CD8-positive, alpha-beta T cell (primary cell): ENCODE measurements at regions of chr15 and their contacts with region 1.

Region 1: DNA sequence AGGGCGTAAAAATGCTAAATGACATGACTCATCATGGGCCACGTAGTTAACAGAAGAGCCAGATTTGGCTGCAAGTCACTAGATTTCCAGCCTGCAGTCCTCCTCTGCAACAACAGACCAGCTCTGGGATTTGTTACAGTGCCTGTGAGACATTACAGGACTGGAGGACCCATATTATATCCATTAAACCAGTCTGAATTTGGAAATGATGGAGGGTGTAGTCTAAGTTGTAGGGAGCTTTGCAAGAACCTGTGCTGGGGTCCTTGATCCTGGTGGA is 10.8 kb downstream of the ZNF774 start:
- DNase-seq: no peak
- ATAC-seq: no peak
- H3K4me3 ChIP-seq: no peak overlapping the region
- H3K4me3 Mint-ChIP-seq: no peak overlapping the region
- H3K27ac ChIP-seq: no peak overlapping the region
- H3K27ac Mint-ChIP-seq: no peak overlapping the region
- H3K4me1 ChIP-seq: peaks cover 12% of the 10 kb centered on the region
- H3K4me1 Mint-ChIP-seq: peaks cover 18% of the 10 kb centered on the region
- H3K27me3 ChIP-seq: no peaks in the 10 kb centered on the region
- H3K27me3 Mint-ChIP-seq: no peaks in the 10 kb centered on the region
- CTCF ChIP-seq: no peak

Region 2: DNA sequence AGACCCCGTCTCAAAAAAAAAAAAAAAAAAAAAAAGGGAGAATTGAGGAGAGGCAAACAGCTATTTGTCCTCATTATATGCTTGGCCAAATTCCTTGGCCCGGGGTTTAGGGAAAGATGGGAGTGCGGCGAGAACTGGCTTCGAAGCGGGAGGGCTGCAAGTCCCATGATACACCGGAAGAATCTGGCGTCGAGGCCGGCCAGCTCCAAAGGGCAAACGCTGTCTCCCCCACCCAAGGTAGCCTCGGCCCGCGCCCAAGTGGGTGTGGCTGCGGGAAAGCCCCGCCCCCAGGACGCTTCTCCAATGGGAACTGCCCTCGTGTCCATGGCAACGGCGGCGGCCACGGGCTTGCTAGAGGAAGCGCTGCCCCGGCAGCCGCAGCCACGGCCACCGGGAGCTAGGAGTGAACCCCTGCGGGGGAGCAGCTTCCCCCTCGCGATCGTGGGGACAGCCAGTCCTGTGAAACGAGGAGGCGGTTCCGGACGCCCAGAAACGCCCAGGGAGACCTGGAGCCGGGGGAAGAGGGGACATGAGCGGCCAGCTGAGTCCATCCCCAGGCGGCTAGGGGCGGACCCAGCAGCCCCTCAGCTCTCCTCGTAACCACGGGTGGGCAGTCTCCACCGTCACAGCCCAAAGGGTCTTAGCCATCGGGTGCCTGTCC is 113.5 kb before region 1 on chr15 and contains the start of gene TTLL13:
- CTCF ChIA-PET with region 1: no interaction called
- POLR2A ChIA-PET with region 1: no interaction called
- intact Hi-C with region 1: no loop called
- DNase-seq: peak in 8 of 9 experiments; percentile 53 to 82 (median 72)
- ATAC-seq: peak; percentile 59
- H3K4me3 ChIP-seq: peak within 1 kb of the TSS; percentile 60 to 64
- H3K4me3 Mint-ChIP-seq: peak within 1 kb of the TSS; percentile 69
- H3K27ac ChIP-seq: peak within 1 kb of the TSS in 1 of 2 experiments; percentile 27
- H3K27ac Mint-ChIP-seq: no peak within 1 kb of the TSS
- H3K4me1 ChIP-seq: peaks cover 7% of the 10 kb centered on the region
- H3K4me1 Mint-ChIP-seq: peaks cover 13% of the 10 kb centered on the region
- H3K27me3 ChIP-seq: no peaks in the 10 kb centered on the region
- H3K27me3 Mint-ChIP-seq: no peaks in the 10 kb centered on the region
- CTCF ChIP-seq: no peak
- total RNA-seq, gene TTLL13: 0.28 to 1.1 TPM

Region 3: DNA sequence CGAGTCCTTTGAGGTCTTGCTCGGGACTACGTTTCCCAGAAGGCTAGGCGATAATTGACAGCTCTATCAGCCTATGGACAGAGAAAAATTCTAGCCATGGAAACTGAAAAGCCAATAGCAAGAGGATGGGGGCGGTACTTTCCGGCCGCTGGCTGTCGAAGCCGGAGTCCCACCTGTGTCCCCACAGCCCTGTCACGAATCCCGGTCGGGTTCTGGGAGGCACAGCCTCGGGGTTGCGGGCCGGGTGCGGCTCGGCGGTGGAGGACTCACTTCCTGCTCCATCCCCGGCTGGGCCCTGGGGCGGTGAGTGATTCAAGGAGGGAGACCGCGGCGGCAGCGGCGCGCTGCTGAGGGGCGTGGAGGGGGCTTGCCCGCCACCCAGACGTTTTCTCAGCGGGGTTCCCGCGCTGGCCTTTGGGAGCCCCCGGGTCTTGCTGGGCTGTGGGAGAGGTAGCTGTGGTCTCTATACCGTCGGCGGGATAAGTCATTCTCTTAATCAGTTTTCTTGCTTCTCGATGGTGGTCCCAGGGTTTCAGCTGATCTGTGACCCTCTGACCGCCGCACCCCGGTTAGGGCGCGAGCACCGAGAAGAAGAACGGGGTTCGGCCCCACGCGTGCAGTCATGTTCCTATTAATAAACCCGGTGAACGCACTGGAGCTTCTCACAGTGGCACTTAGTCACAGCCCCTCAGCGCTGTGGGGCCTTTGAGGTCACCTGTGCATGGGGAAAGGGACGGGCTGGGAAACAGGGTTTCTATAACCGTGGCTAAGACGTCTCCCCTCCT is 10.6 kb before region 1 on chr15 and contains the start of gene ZNF774:
- CTCF ChIA-PET with region 1: interaction called, 27 read pairs
- POLR2A ChIA-PET with region 1: interaction called, 4 read pairs
- intact Hi-C with region 1: no loop called
- DNase-seq: peak; percentile 76 to 97 (median 89)
- ATAC-seq: peak; percentile 97
- H3K4me3 ChIP-seq: peak within 1 kb of the TSS; percentile 66 to 69
- H3K4me3 Mint-ChIP-seq: peak within 1 kb of the TSS; percentile 90
- H3K27ac ChIP-seq: peak within 1 kb of the TSS in 1 of 2 experiments; percentile 18
- H3K27ac Mint-ChIP-seq: peak within 1 kb of the TSS; percentile 79
- H3K4me1 ChIP-seq: peaks cover 5% of the 10 kb centered on the region
- H3K4me1 Mint-ChIP-seq: peaks cover 7% of the 10 kb centered on the region
- H3K27me3 ChIP-seq: no peaks in the 10 kb centered on the region
- H3K27me3 Mint-ChIP-seq: no peaks in the 10 kb centered on the region
- CTCF ChIP-seq: no peak
- total RNA-seq, gene ZNF774: 0.08 TPM in 1 of 2 experiments, not detected in the other

Region 4: DNA sequence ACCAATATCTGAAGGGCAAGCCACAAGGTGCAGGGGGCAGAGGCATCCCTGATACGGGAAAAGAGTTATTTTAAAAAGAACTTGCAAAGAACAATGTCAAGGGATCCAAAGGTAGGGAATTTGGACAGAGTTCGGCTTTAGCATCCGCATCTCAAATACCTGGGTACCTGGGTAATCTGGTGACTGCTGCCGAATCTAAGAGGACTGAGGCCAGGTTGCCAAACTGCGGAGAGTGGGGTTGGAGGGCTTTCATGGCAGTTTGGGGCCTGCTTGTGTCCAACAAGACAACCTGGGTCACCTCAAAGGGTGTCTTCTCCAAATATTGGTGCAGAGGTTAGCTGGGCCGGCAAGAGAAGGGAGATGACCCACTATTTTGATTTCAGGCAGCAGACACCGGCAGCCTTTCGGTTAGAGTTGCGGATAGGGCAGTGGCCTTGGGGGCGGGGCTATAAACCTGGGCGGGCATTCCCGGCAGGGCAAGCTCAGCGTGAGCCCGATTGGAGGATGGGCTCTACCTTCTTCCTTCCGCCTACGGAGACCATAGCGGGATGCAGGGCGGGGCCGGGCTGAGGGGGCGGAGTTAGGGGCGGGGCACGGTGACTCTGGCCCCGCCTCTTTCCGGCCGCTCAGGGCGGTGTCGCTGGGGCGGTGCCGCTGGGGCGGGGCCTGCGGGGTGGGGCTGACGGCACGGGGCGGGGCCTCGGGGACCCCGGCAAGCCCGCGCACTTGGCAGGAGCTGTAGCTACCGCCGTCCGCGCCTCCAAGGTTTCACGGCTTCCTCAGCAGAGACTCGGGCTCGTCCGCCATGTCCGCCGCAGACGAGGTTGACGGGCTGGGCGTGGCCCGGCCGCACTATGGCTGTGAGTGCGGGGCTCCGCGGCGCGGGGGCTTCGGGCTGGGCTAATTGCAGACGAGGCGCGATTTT is 24.9 kb after region 1 on chr15 and contains the start of gene IQGAP1:
- CTCF ChIA-PET with region 1: interaction called, 8 read pairs
- POLR2A ChIA-PET with region 1: no interaction called
- intact Hi-C with region 1: loop called in 1 of 2 experiments (anchors 1 kb)
- DNase-seq: peak; percentile 92 to 97 (median 95)
- ATAC-seq: peak; percentile 91
- H3K4me3 ChIP-seq: peak within 1 kb of the TSS; percentile 90 to 94
- H3K4me3 Mint-ChIP-seq: peak within 1 kb of the TSS; percentile 90
- H3K27ac ChIP-seq: peak within 1 kb of the TSS; percentile 86 to 90
- H3K27ac Mint-ChIP-seq: peak within 1 kb of the TSS; percentile 96
- H3K4me1 ChIP-seq: peaks cover 44% of the 10 kb centered on the region
- H3K4me1 Mint-ChIP-seq: peaks cover 45% of the 10 kb centered on the region
- H3K27me3 ChIP-seq: no peaks in the 10 kb centered on the region
- H3K27me3 Mint-ChIP-seq: no peaks in the 10 kb centered on the region
- CTCF ChIP-seq: no peak
- total RNA-seq, gene IQGAP1: 57.4 to 69.5 TPM

Region 5: GRCh38 chr15:90432253-90432652 is 69.4 kb after region 1 on chr15:
- CTCF ChIA-PET with region 1: interaction called, 7 read pairs
- POLR2A ChIA-PET with region 1: no interaction called
- intact Hi-C with region 1: loop called in 1 of 2 experiments (anchors 5 kb)
- DNase-seq: no peak
- ATAC-seq: no peak
- H3K4me3 ChIP-seq: no peak overlapping the region
- H3K4me3 Mint-ChIP-seq: no peak overlapping the region
- H3K27ac ChIP-seq: no peak overlapping the region
- H3K27ac Mint-ChIP-seq: no peak overlapping the region
- H3K4me1 ChIP-seq: no peaks in the 10 kb centered on the region
- H3K4me1 Mint-ChIP-seq: peaks cover 30% of the 10 kb centered on the region
- H3K27me3 ChIP-seq: no peaks in the 10 kb centered on the region
- H3K27me3 Mint-ChIP-seq: no peaks in the 10 kb centered on the region
- CTCF ChIP-seq: no peak

Region 6: DNA sequence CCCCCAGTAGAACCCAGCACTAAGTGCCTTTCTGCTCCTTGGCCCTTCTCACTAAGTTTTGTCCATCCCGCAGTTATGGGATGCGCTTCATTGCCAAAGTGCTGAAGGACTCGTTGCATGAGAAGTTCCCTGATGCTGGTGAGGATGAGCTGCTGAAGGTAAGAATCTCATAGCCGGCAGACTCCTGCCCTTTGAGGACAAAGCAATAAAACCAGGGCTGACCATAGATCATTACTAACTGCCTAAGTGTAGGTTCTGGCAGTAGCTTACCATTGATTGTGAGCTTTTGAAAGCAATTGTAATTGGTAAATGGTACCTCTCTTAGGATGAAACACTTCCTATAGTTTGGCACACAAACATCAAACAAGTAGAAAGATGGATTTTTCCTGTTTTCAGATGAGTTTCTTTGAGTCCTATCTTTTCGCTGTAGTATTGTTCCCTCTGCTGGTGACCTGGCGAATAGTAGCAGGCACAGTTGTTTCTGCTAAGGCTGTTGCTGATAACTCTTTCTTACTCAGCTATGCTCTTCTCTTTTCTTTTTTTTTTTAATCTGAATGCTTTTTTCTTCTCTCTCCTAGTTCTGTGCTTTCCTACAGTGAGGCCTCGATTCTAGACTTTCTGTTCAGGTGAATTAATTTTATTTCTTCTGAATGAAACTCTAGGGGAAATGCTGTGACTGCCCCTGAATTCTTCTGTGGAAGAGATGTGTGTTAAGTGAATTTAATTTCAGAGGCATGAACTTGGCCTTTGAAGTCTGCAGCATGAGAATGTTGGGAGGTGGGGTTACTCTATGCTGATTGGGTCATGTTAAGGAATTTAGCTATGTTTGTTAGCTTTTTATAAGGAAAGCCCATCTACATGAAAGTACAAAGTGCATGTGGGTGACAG is 119.5 kb after region 1 on chr15:
- CTCF ChIA-PET with region 1: interaction called, 121 read pairs
- POLR2A ChIA-PET with region 1: no interaction called
- intact Hi-C with region 1: loop called (anchors 1 kb)
- DNase-seq: peak in 8 of 9 experiments; percentile 10 to 67 (median 49)
- ATAC-seq: peak; percentile 67
- H3K4me3 ChIP-seq: no peak overlapping the region
- H3K4me3 Mint-ChIP-seq: no peak overlapping the region
- H3K27ac ChIP-seq: no peak overlapping the region
- H3K27ac Mint-ChIP-seq: no peak overlapping the region
- H3K4me1 ChIP-seq: peaks cover 12% of the 10 kb centered on the region
- H3K4me1 Mint-ChIP-seq: peaks cover 24% of the 10 kb centered on the region
- H3K27me3 ChIP-seq: no peaks in the 10 kb centered on the region
- H3K27me3 Mint-ChIP-seq: no peaks in the 10 kb centered on the region
- CTCF ChIP-seq: peak; percentile 84